ENCODE measurements at regions of chr7 and their contacts with region 1.

Region 1: GRCh38 chr7:83643756-83644155 is 5.2 kb downstream of the SEMA3E start:
- DNase-seq: no peak
- H3K4me3 ChIP-seq: no peak overlapping the region
- H3K4me3 Mint-ChIP-seq: no peak overlapping the region
- H3K27ac Mint-ChIP-seq: no peak overlapping the region
- H3K4me1 ChIP-seq: no peaks in the 10 kb centered on the region
- H3K4me1 Mint-ChIP-seq: no peaks in the 10 kb centered on the region
- H3K27me3 ChIP-seq: no peaks in the 10 kb centered on the region
- H3K27me3 Mint-ChIP-seq: peaks cover 9% of the 10 kb centered on the region
- CTCF ChIP-seq: no peak

Region 2: DNA sequence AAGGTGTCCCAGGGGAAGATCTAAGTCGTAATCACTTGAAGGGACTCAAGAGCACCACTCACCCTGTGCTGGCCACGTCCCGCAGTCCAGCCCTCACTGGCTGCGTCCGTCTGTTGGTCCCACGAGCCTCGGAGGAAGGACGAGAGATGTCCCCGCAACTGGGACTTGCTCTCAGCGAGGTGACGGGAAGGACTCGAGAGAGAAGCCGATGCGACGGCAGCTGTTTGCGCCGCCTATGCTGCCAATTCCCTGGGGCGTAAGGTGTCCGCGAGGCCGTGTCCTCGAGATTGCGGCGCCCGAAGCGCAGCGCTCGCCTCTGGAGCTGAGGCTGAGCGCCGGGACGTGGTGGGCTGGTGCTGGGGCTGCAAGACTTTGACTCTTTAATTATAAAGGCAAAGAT is 105.7 kb after region 1 on chr7:
- CTCF ChIA-PET with region 1: no interaction called
- POLR2A ChIA-PET with region 1: no interaction called
- intact Hi-C with region 1: loop called (anchors 5 kb)
- DNase-seq: no peak
- H3K4me3 ChIP-seq: no peak overlapping the region
- H3K4me3 Mint-ChIP-seq: no peak overlapping the region
- H3K27ac Mint-ChIP-seq: no peak overlapping the region
- H3K4me1 ChIP-seq: no peaks in the 10 kb centered on the region
- H3K4me1 Mint-ChIP-seq: no peaks in the 10 kb centered on the region
- H3K27me3 ChIP-seq: no peaks in the 10 kb centered on the region
- H3K27me3 Mint-ChIP-seq: peaks cover 3% of the 10 kb centered on the region
- CTCF ChIP-seq: no peak